ENCODE measurements at regions of chr6 and their contacts with region 1.

Region 1: DNA sequence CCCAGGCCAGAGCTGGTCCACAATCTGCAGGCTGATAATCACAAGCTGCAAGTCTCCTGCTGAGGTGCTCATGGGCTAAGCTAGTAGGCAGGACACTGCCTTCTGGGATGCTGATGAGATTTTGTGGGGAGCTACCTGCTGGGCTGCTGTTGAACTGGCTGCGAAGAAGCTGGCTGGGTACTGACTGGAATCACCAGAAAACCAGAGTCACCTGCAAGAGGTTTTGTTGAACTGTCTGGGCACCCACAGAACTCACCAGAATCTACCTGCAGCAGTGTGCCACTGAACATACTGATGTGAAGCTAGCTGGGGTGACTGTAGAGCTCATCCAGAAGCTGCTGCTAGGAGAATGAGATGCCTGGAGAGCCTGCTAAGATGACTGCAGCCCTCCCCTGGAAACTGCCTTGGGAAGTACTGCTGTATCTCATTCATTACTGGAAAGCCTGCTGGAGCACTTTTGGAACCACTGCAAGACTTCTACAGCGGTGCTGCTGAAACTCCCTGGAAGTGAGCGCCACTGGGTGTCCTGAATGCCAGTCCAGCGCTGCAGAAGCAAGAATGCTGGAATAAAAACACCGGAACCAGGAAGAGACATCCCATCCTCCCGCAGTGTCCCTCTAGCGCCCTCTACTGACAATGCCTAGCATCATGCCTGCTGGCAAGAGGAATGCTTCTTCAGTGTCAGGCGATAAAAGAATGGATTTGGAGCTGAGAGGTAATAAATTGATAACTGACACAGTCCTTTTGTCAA is 64.9 kb upstream of the ARHGAP18 start:
- DNase-seq: peak; percentile 64
- H3K4me3 Mint-ChIP-seq: no peak overlapping the region
- H3K27ac Mint-ChIP-seq: no peak overlapping the region
- H3K4me1 Mint-ChIP-seq: peaks cover 9% of the 10 kb centered on the region
- H3K27me3 Mint-ChIP-seq: peaks cover 32% of the 10 kb centered on the region

Region 2: DNA sequence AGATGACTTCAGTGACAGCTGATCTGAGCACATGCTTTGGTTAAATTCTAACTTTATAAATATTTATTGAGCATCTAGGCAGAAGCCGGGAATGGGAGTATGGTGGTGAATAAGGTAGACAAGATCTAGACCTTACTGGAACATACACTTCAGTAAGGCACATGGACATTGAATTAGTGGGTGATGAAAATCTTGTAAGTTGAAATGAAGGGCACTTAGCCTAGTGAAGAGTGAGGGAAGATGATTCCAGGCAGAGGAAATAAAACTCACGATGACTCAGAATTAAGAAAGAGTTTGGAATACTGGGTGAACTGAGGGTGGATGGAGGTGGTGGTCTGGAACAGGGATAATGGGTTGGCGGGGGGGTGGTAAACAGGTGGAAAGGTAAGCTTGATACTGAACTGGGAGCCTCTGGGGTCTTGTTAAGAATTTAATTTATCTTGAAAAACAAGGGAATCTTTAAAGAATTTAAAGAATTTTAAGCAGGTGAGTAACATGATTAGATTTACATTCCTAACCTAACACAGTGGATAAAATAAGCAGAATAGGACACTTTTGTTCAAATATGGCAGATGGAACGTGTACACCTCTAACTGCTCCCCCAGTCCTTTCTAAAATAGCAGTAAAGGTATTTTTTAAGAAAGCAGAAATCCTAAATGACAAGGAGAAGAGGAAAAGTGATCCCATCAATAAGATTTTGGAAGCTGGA is 10.3 kb after region 1 on chr6:
- CTCF ChIA-PET with region 1: interaction called, 12 read pairs
- DNase-seq: no peak
- H3K4me3 Mint-ChIP-seq: no peak overlapping the region
- H3K27ac Mint-ChIP-seq: no peak overlapping the region
- H3K4me1 Mint-ChIP-seq: no peaks in the 10 kb centered on the region
- H3K27me3 Mint-ChIP-seq: peaks cover 13% of the 10 kb centered on the region

Region 3: DNA sequence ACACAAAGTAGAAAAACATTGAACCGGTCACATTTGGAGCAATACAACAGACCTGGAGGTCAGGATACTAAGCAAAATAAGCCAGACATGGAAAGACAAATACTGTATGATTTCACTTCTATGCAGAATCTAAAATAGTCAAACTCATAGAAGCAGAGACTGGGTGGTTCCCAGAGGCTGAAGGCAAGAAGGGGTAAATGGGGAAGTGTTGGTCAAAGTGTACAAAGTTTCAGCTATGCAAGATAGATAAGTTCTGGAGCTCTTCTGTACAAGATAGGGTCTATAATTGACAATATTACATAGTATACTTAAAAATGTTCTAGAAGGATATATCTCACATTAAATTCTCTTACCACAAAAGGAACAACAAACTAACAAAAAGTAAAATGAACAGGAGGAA is 15.9 kb after region 1 on chr6:
- CTCF ChIA-PET with region 1: interaction called, 12 read pairs
- DNase-seq: no peak
- H3K4me3 Mint-ChIP-seq: no peak overlapping the region
- H3K27ac Mint-ChIP-seq: no peak overlapping the region
- H3K4me1 Mint-ChIP-seq: peaks cover 6% of the 10 kb centered on the region
- H3K27me3 Mint-ChIP-seq: peaks cover 7% of the 10 kb centered on the region